ENCODE measurements at regions of chr1 and their contacts with region 1.

Region 1: DNA sequence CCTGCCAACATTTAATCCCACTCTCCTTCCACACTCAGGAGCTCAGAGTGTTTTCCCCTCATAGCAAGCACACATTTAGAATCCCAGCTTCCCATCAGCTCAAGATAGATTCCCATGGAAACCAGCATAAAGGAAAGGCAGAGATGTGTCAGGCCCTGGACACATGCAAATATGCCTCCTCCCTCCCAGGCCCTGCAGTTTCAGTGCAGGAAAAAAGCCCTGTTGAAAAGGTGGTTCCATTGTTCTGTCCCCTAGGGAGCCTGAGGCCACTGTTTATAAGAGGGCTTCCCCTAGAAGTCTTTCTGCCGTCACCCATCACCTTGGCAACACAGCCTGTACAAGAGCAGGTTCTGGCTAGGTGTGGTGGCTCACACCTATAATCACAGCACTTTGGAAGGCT is 3.6 kb downstream of the CACNA1S start:
- DNase-seq: no peak
- H3K4me3 Mint-ChIP-seq: no peak overlapping the region
- H3K27ac Mint-ChIP-seq: no peak overlapping the region
- H3K4me1 Mint-ChIP-seq: no peaks in the 10 kb centered on the region
- H3K27me3 Mint-ChIP-seq: peaks cover 28% of the 10 kb centered on the region

Region 2: DNA sequence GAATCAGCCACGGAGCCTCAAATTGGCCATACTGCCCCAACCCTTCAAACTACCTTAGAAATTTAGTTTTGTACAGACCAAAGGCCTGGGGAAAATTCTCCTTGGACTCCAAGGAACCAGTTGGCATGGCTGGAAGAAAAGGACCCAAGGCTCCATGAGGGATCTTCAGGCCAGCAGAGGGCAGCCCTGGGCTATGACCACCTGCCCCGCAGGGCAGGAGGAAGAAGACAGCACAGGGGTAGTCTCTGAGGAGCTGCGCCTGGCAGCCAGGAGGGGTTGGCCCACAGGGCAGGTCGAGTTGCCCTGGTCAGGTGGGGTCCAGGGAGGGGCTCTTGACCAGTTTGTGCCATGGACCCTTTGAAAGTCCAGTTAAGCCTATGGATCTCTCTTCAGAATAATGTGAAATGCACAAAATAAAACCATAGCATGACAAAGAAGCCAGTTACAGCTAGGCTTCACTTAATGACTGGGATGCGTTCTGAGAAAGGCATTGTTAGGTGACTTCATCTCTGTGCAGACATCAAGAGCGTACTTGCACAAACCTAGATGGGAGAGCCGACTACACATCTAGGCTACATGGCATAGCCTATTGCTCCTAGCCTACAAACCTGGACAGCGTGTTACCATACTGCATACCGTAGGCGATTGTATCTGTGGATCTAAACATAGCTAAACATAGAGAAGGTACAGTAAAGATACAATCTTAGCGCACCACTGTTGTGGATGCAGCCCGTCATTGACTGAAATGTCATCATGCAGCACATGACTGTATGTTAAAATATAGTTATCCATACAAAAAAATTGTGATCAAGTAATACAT is 22.5 kb before region 1 on chr1:
- CTCF ChIA-PET with region 1: interaction called, 10 read pairs
- DNase-seq: peak; percentile 57
- H3K4me3 Mint-ChIP-seq: no peak overlapping the region
- H3K27ac Mint-ChIP-seq: no peak overlapping the region
- H3K4me1 Mint-ChIP-seq: no peaks in the 10 kb centered on the region
- H3K27me3 Mint-ChIP-seq: peaks cover 44% of the 10 kb centered on the region

Region 3: GRCh38 chr1:201126832-201127754 is 18.5 kb after region 1 on chr1 and contains the start of gene ASCL5:
- CTCF ChIA-PET with region 1: no interaction called
- DNase-seq: no peak
- H3K4me3 Mint-ChIP-seq: no peak within 1 kb of the TSS
- H3K27ac Mint-ChIP-seq: no peak within 1 kb of the TSS
- H3K4me1 Mint-ChIP-seq: no peaks in the 10 kb centered on the region
- H3K27me3 Mint-ChIP-seq: peaks cover 46% of the 10 kb centered on the region